CD8-positive, alpha-beta T cell (primary cell): ENCODE measurements at regions of chr19 and their contacts with region 1.

Region 1: DNA sequence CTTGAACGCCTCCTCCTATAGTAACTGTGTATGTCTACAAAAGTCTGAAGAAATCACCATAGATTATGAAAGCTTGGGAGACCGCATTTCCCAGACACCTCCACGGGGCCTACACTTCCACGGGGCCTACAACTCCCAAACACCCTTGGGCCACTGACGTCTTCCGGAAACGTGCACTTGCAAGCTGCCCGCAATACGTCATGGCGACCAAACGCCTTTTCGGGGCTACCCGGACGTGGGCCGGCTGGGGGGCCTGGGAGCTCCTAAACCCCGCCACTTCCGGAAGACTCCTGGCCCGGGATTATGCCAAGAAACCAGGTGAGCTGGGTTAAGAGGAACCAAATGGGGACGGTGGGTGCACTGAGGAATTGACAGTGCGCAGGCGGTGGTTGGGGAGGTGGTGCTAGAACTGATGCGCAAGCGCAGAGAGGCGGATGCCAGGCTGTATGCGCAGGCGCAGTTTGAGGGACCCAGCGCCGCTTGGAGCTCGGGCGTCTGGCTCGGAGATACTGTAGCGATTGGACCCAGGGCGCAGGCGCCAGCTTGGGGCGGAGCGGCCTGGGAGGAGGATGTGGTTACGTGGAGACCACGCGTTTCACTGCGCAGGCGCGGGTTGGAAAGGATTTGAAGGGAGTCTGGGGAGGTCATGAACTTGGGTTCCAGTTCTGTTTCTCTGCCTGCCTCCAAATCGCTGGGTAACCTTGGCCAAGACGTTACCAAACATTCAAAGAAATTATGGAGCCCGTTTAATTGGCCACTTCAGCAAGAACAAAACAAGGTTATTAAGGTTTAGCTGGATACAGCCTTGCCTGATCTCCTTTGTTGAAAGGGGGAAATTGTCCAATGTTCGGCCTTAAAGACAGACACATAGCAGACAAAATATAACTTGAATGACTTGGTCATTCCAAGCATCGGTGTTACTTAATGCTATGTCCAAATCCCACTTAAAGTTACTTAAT is at the start of gene MRPL54:
- DNase-seq: peak; percentile 98 to 100 (median 99)
- ATAC-seq: peak; percentile 79
- H3K4me3 ChIP-seq: peak within 1 kb of the TSS; percentile 80 to 90
- H3K4me3 Mint-ChIP-seq: peak within 1 kb of the TSS; percentile 95
- H3K27ac ChIP-seq: peak within 1 kb of the TSS; percentile 98 to 99
- H3K27ac Mint-ChIP-seq: peak within 1 kb of the TSS; percentile 100
- H3K4me1 ChIP-seq: peaks cover 46% of the 10 kb centered on the region
- H3K4me1 Mint-ChIP-seq: peaks cover 47% of the 10 kb centered on the region
- H3K27me3 ChIP-seq: no peaks in the 10 kb centered on the region
- H3K27me3 Mint-ChIP-seq: no peaks in the 10 kb centered on the region
- CTCF ChIP-seq: no peak
- total RNA-seq, gene MRPL54: 72.5 to 78.0 TPM

Region 2: GRCh38 chr19:3505598-3506383 is 257.0 kb before region 1 on chr19 and contains the start of gene FZR1:
- CTCF ChIA-PET with region 1: no interaction called
- POLR2A ChIA-PET with region 1: no interaction called
- intact Hi-C with region 1: loop called (anchors 2 to 5 kb)
- DNase-seq: peak; percentile 99 to 100 (median 100)
- ATAC-seq: peak; percentile 85
- H3K4me3 ChIP-seq: peak within 1 kb of the TSS; percentile 76 to 83
- H3K4me3 Mint-ChIP-seq: peak within 1 kb of the TSS; percentile 85
- H3K27ac ChIP-seq: peak within 1 kb of the TSS; percentile 97
- H3K27ac Mint-ChIP-seq: peak within 1 kb of the TSS; percentile 97
- H3K4me1 ChIP-seq: peaks cover 36% of the 10 kb centered on the region
- H3K4me1 Mint-ChIP-seq: peaks cover 48% of the 10 kb centered on the region
- H3K27me3 ChIP-seq: no peaks in the 10 kb centered on the region
- H3K27me3 Mint-ChIP-seq: no peaks in the 10 kb centered on the region
- CTCF ChIP-seq: no peak
- total RNA-seq, gene FZR1: 130 to 142 TPM

Region 3: DNA sequence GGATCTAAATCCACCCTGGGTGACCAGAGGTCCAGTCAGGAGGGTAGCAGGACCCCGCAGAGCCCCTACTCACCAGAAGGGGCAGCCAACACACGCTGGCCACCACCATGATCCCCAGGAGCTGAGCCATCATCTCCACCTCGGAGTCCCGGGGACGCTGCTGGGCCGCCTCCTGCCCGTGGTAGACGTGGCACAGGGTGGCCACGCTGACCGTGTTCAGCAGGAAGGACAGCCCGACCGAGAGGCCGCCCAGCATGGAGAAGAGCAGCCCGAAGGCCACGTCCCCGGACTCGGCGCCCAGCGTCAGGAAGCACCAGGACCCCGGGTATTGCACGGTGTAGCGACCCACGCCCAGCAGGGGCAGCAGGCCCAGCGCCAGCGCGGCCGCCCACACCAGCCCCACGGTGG is 163.0 kb before region 1 on chr19:
- CTCF ChIA-PET with region 1: no interaction called
- POLR2A ChIA-PET with region 1: no interaction called
- intact Hi-C with region 1: no loop called
- DNase-seq: peak in 1 of 9 experiments; percentile 9
- ATAC-seq: no peak
- H3K4me3 ChIP-seq: no peak overlapping the region
- H3K4me3 Mint-ChIP-seq: no peak overlapping the region
- H3K27ac ChIP-seq: no peak overlapping the region
- H3K27ac Mint-ChIP-seq: no peak overlapping the region
- H3K4me1 ChIP-seq: peaks cover 10% of the 10 kb centered on the region
- H3K4me1 Mint-ChIP-seq: no peaks in the 10 kb centered on the region
- H3K27me3 ChIP-seq: no peaks in the 10 kb centered on the region
- H3K27me3 Mint-ChIP-seq: no peaks in the 10 kb centered on the region
- CTCF ChIP-seq: no peak

Region 4: DNA sequence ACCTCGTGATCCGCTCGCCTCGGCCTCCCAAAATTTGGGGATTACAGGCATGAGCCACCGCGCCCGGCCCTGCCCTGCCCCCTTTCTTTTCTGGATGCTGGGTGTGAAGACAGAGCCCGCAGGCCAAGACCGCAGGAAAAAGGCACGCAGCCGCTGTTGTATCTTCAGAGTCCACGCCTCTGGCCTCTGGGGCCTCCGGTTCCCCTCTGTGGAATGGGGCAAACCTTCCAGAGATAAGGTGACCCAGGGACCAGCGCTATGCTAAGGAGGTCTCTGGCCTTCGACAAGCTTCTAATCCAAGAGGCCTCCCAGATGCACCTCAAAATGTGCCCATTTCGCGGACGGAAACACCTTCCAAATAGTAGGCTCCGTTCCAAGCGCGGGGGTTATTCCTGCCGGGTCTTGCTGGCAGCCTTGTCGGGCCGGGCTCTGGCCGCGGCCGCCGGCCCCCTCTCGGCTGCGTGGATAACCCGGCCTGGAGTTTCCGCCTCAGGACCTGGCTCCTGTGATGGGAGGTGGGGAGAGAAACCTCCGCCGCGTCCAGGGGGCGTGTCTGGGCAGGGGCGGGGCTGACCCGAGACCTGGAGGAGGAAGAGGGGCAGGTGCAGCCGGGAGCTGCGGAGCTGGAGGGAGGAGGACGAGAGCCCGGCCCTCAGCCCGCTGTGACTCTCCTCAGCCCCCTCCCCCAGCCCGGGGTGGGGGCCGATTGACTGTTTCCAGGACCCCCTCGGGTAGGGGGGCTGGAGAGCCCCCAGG is 41.5 kb before region 1 on chr19:
- CTCF ChIA-PET with region 1: interaction called, 5 read pairs
- POLR2A ChIA-PET with region 1: interaction called, 9 read pairs
- intact Hi-C with region 1: loop called (anchors 1 to 2 kb)
- DNase-seq: peak; percentile 78 to 90 (median 85)
- ATAC-seq: peak; percentile 97
- H3K4me3 ChIP-seq: peak overlapping the region; percentile 55
- H3K4me3 Mint-ChIP-seq: peak overlapping the region; percentile 79
- H3K27ac ChIP-seq: no peak overlapping the region
- H3K27ac Mint-ChIP-seq: no peak overlapping the region
- H3K4me1 ChIP-seq: peaks cover 20% of the 10 kb centered on the region
- H3K4me1 Mint-ChIP-seq: peaks cover 6% of the 10 kb centered on the region
- H3K27me3 ChIP-seq: peaks cover 4 to 7% of the 10 kb centered on the region in 2 experiments
- H3K27me3 Mint-ChIP-seq: peaks cover 10% of the 10 kb centered on the region
- CTCF ChIP-seq: no peak

Region 5: DNA sequence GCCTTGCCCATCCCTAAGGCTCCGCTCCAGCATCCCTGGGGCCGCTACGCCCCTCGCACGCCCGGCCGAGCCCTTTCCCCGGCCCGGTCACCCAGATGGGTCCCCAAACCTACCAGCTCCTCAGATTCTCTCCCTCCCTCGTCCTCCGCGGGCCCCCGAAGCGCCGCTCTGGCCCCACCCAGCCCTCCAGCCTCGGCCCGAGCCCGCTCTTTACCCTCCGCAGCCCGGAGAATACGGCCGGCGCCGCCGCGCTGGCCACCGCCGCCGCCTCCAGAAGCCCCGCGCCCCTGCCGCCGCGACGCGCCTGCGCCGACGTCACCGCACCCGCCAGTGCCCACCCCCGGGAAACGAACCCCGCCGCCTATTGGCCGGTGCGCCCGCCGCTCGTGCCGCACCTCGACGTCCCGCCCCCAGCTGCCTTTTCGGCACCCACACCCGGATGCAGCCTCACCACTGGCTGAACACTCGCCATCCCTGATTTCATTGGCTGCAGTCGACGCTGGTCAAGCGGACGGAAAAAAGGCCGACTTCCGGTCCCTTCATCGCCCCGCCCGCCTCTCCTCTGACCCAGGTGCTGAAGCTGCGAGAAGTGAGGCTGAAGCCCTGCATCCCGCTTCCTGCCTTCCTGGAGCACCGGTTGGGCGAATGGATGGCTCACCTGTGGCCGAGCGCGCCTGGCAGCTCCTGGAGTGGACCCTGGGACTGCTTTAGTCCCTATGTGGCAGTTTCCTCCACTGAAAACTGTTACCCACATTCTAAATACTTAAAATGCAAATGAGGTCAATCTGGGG is 208.2 kb after region 1 on chr19 and contains the start of gene DAPK3:
- CTCF ChIA-PET with region 1: no interaction called
- POLR2A ChIA-PET with region 1: no interaction called
- intact Hi-C with region 1: loop called in 1 of 2 experiments (anchors 5 kb)
- DNase-seq: peak; percentile 70 to 93 (median 90)
- ATAC-seq: peak; percentile 91
- H3K4me3 ChIP-seq: peak within 1 kb of the TSS; percentile 92 to 93
- H3K4me3 Mint-ChIP-seq: peak within 1 kb of the TSS; percentile 83
- H3K27ac ChIP-seq: peak within 1 kb of the TSS; percentile 74 to 84
- H3K27ac Mint-ChIP-seq: peak within 1 kb of the TSS; percentile 78
- H3K4me1 ChIP-seq: peaks cover 20% of the 10 kb centered on the region
- H3K4me1 Mint-ChIP-seq: peaks cover 36% of the 10 kb centered on the region
- H3K27me3 ChIP-seq: no peaks in the 10 kb centered on the region
- H3K27me3 Mint-ChIP-seq: no peaks in the 10 kb centered on the region
- CTCF ChIP-seq: no peak
- total RNA-seq, gene DAPK3: 20.7 to 21.5 TPM

Region 6: DNA sequence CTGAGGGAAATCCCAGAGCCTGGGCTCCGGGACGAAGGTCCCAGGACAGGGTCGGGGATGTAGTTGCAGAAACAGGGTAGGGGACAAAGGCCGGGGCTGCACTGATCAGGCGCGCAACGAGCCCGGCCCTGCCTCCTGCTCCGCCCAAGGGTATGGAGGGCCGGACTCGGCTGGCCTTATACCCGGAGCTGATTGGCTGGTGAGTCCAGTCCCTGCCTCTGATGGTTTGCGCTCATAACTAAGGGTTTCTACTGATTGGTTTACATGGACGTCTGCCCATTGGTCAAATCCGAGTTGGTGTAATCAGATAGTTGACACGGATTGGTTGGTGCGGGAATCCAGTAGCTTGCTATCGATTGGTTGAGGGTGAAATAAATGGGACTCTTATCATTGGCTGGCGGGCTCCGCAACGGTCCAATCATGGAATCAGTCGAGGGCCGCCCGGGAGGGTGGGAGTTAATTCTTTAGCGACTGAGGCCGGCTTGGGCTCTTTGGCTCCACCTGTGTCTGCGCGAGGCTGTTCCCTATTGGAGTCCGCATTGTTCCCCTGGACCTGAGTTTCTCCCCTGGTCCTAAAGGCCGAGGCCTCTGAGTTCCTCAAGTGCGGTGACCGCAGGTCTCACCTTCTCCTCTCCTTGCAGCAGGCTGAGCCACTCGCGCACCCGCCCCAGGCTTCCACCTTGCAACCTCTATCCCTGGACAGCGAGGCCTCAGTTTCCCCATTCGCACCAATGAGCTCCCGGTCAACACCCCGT is 580.0 kb after region 1 on chr19:
- CTCF ChIA-PET with region 1: no interaction called
- POLR2A ChIA-PET with region 1: no interaction called
- intact Hi-C with region 1: loop called in 1 of 2 experiments (anchors 2 kb)
- DNase-seq: peak; percentile 80 to 99 (median 87)
- ATAC-seq: peak; percentile 78
- H3K4me3 ChIP-seq: peak overlapping the region; percentile 72 to 100
- H3K4me3 Mint-ChIP-seq: peak overlapping the region; percentile 92
- H3K27ac ChIP-seq: peak overlapping the region; percentile 81 to 83
- H3K27ac Mint-ChIP-seq: peak overlapping the region; percentile 91
- H3K4me1 ChIP-seq: peaks cover 20% of the 10 kb centered on the region
- H3K4me1 Mint-ChIP-seq: peaks cover 36% of the 10 kb centered on the region
- H3K27me3 ChIP-seq: no peaks in the 10 kb centered on the region
- H3K27me3 Mint-ChIP-seq: no peaks in the 10 kb centered on the region
- CTCF ChIP-seq: no peak

Region 7: DNA sequence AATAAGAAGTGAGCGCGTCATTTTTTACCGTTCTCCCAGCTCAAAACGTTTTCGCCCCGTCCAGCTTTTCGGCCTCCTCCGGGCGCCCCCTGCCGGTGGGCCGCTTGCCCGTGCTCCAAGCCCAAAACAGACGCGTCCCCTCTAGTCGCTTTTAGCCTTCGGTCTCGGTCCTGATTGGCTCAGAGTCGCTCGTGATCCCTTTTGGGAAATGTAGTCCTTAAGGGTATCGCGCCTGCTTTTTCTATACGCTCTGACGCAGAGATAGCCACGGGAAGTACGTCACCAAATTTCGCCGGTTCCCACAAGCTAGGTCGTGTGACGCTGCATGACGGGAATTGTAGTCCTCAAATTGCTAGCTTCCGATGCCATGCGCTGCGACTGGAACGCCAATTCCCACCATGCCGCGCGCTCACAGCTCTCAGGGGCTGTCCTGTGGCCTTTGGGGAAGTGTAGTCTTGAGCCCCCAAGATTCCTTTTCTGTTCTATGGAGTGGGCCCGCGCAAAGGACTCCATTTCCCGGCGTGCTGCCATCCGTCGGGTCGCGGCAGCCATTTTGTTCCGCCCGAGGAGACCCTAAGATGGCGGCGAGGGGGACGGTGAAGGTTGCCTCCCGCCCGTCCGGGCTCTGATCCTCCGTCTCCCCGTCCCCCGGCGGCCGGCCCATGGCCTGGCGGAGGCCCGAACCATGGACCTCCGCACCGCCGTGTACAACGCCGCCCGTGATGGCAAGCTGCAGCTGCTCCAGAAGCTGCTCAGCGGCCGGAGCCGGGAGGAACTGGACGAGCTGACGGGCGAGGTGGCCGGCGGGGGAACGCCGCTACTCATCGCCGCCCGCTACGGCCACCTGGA is 1028.6 kb after region 1 on chr19 and contains the start of gene FEM1A:
- CTCF ChIA-PET with region 1: no interaction called
- POLR2A ChIA-PET with region 1: no interaction called
- intact Hi-C with region 1: loop called in 1 of 2 experiments (anchors 5 kb)
- DNase-seq: peak; percentile 96 to 100 (median 98)
- ATAC-seq: peak; percentile 94
- H3K4me3 ChIP-seq: peak within 1 kb of the TSS; percentile 73 to 82
- H3K4me3 Mint-ChIP-seq: peak within 1 kb of the TSS; percentile 86
- H3K27ac ChIP-seq: peak within 1 kb of the TSS; percentile 81 to 93
- H3K27ac Mint-ChIP-seq: peak within 1 kb of the TSS; percentile 89
- H3K4me1 ChIP-seq: peaks cover 16% of the 10 kb centered on the region
- H3K4me1 Mint-ChIP-seq: peaks cover 33% of the 10 kb centered on the region
- H3K27me3 ChIP-seq: no peaks in the 10 kb centered on the region
- H3K27me3 Mint-ChIP-seq: no peaks in the 10 kb centered on the region
- CTCF ChIP-seq: peak; percentile 99
- total RNA-seq, gene FEM1A: 16.7 to 17.4 TPM